Activated B cell treated with CpG ODN at 0.5 μM for 24 hours (primary cell): ENCODE measurements at regions of chr3 and their contacts with region 1.

Region 1: DNA sequence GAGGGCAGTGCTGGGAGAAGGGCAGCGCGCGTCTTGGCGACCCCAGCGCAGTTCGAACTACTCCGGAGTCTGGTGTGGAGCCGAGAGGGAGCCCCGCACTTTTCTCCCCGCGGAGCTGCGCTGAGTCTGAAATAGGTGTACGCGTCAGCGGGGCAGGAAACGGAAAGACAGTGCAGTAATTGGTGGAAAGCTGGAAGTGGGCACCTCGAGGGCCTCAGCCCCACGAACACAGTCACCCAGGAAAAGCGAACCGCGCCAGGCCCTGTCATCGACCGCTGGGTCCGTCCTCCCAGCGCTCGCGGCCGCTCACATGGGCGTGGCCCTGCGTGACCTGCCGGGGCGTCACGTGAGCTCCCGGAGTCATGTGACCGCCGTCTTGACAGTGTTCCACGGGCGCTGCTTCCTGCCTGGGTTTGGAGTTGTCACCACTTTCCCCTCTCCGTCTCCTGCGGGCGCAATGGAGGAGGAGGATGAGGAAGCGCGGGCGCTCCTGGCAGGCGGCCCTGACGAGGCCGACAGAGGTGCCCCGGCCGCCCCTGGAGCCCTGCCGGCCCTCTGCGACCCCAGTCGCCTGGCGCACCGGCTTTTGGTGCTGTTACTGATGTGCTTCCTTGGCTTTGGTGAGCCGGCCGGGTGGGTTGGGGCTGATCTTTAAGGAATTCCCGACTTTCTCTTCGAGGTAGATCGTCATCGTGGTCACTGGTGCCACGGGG is at the start of gene MFSD1:
- DNase-seq: peak; percentile 82
- ATAC-seq: peak; percentile 89
- H3K4me3 Mint-ChIP-seq: peak within 1 kb of the TSS; percentile 94
- H3K27ac Mint-ChIP-seq: peak within 1 kb of the TSS; percentile 87
- H3K4me1 Mint-ChIP-seq: peaks cover 37% of the 10 kb centered on the region
- H3K27me3 Mint-ChIP-seq: no peaks in the 10 kb centered on the region
- CTCF ChIP-seq: no peak
- total RNA-seq, gene MFSD1: 36.8 and 41.6 TPM in 2 replicates

Region 2: GRCh38 chr3:158097593-158098308 is 704.1 kb before region 1 on chr3:
- CTCF ChIA-PET with region 1: no interaction called
- POLR2A ChIA-PET with region 1: no interaction called
- intact Hi-C with region 1: loop called (anchors 5 kb)
- DNase-seq: peak; percentile 79
- ATAC-seq: peak; percentile 93
- H3K4me3 Mint-ChIP-seq: peak overlapping the region; percentile 98
- H3K27ac Mint-ChIP-seq: peak overlapping the region; percentile 74
- H3K4me1 Mint-ChIP-seq: peaks cover 22% of the 10 kb centered on the region
- H3K27me3 Mint-ChIP-seq: peaks cover 57% of the 10 kb centered on the region
- CTCF ChIP-seq: no peak

Region 3: GRCh38 chr3:158109804-158110657 is 691.8 kb before region 1 on chr3 and contains the start of gene RSRC1:
- CTCF ChIA-PET with region 1: no interaction called
- POLR2A ChIA-PET with region 1: interaction called, 6 read pairs
- intact Hi-C with region 1: loop called (anchors 2 kb)
- DNase-seq: peak; percentile 72
- ATAC-seq: peak; percentile 89
- H3K4me3 Mint-ChIP-seq: peak within 1 kb of the TSS; percentile 90
- H3K27ac Mint-ChIP-seq: peak within 1 kb of the TSS; percentile 83
- H3K4me1 Mint-ChIP-seq: peaks cover 48% of the 10 kb centered on the region
- H3K27me3 Mint-ChIP-seq: peaks cover 31% of the 10 kb centered on the region
- CTCF ChIP-seq: no peak
- total RNA-seq, gene RSRC1: 39.9 and 44.8 TPM in 2 replicates

Region 4: GRCh38 chr3:158570999-158571974 is 230.6 kb before region 1 on chr3 and contains the start of gene MLF1:
- CTCF ChIA-PET with region 1: no interaction called
- POLR2A ChIA-PET with region 1: no interaction called
- intact Hi-C with region 1: loop called (anchors 1 kb)
- DNase-seq: peak; percentile 64
- ATAC-seq: peak; percentile 97
- H3K4me3 Mint-ChIP-seq: peak within 1 kb of the TSS; percentile 85
- H3K27ac Mint-ChIP-seq: peak within 1 kb of the TSS; percentile 59
- H3K4me1 Mint-ChIP-seq: peaks cover 12% of the 10 kb centered on the region
- H3K27me3 Mint-ChIP-seq: peaks cover 42% of the 10 kb centered on the region
- CTCF ChIP-seq: no peak
- total RNA-seq, gene MLF1: not detected in 2 replicates

Region 5: GRCh38 chr3:158672293-158673176 is 129.3 kb before region 1 on chr3 and contains the start of gene LXN:
- CTCF ChIA-PET with region 1: no interaction called
- POLR2A ChIA-PET with region 1: no interaction called
- intact Hi-C with region 1: loop called (anchors 5 kb)
- DNase-seq: peak; percentile 54
- ATAC-seq: peak; percentile 98
- H3K4me3 Mint-ChIP-seq: peak within 1 kb of the TSS; percentile 94
- H3K27ac Mint-ChIP-seq: peak within 1 kb of the TSS; percentile 86
- H3K4me1 Mint-ChIP-seq: peaks cover 21% of the 10 kb centered on the region
- H3K27me3 Mint-ChIP-seq: no peaks in the 10 kb centered on the region
- CTCF ChIP-seq: no peak
- total RNA-seq, gene LXN: 5.2 and 5.9 TPM in 2 replicates

Region 6: DNA sequence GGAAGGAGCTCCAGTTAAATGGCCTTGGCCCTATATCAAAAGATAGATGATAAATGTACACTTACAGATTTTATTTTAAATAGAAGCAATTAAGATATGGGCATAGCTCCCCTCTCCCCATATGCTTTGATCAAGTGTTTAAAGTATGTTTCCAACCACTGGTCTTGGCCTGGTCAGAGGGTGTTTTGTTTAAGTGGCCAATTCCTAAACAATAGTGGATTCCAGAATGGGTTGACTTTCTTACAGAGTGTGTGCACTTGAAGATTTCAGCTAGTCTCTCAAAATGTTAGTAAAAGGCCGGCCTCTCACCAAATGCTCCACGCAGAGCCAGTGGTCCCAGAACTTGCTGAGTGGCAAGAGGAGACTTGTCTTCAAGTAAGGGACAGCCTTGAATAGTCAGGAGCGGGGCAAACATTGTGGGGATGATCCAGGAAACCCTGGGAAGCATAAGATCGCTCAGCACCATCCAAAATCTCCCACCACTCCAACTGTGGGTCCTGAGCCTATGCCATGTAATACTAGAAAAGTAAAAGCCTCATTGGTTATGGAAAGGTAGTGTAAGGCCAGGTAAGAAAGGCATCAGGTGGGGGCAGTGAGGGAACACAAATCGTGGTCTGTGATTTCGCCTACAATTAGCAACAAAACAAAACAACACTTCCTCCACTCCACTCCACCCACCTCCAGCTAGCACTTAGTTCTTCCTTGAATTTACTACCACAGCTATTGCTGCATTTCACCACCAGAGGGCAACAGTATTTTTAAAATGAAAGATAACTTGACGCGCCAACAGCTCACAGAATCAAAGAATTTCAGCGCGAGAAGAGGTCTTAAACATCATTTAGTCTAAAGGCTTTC is 74.4 kb before region 1 on chr3:
- CTCF ChIA-PET with region 1: interaction called, 14 read pairs
- POLR2A ChIA-PET with region 1: interaction called, 3 read pairs
- intact Hi-C with region 1: no loop called
- DNase-seq: no peak
- ATAC-seq: peak; percentile 62
- H3K4me3 Mint-ChIP-seq: no peak overlapping the region
- H3K27ac Mint-ChIP-seq: no peak overlapping the region
- H3K4me1 Mint-ChIP-seq: peaks cover 28% of the 10 kb centered on the region
- H3K27me3 Mint-ChIP-seq: no peaks in the 10 kb centered on the region
- CTCF ChIP-seq: peak; percentile 17

Region 7: DNA sequence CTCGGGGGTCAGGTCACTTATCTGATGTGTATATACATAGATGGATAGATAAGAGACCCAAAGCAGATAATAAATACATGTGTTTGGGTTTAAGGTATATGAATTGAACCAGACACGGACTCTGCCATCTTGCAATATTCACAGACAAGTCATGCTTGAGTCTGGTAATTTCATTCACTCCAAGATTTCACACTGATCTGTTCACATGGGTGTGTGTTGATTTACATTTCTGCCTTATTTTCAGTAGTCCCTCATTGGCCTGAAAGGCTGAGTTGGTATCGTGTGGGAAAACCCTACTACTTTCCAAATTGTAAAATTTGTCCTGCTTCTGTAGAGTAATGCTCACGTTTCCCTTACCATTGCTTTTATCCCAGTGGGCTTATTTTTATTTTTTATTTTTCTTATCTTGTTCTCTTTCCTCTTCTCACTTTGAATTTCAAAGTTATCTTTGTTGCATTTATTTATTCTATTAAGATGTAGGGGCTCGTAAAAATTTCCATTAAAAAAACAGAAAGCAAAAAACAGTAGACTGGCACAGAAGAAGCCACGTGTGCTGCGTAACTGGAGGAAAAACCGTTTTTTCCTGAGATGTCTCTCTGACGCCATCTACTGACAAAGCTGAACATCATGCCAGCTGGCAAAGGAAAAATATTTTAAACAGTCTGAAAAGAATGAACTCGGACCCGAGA is 10.8 kb before region 1 on chr3:
- CTCF ChIA-PET with region 1: interaction called, 12 read pairs
- POLR2A ChIA-PET with region 1: interaction called, 3 read pairs
- intact Hi-C with region 1: no loop called
- DNase-seq: no peak
- ATAC-seq: peak; percentile 56
- H3K4me3 Mint-ChIP-seq: peak overlapping the region; percentile 77
- H3K27ac Mint-ChIP-seq: no peak overlapping the region
- H3K4me1 Mint-ChIP-seq: peaks cover 3% of the 10 kb centered on the region
- H3K27me3 Mint-ChIP-seq: peaks cover 2% of the 10 kb centered on the region
- CTCF ChIP-seq: no peak